ENCODE measurements at regions of chr20 and their contacts with region 1.

Region 1: DNA sequence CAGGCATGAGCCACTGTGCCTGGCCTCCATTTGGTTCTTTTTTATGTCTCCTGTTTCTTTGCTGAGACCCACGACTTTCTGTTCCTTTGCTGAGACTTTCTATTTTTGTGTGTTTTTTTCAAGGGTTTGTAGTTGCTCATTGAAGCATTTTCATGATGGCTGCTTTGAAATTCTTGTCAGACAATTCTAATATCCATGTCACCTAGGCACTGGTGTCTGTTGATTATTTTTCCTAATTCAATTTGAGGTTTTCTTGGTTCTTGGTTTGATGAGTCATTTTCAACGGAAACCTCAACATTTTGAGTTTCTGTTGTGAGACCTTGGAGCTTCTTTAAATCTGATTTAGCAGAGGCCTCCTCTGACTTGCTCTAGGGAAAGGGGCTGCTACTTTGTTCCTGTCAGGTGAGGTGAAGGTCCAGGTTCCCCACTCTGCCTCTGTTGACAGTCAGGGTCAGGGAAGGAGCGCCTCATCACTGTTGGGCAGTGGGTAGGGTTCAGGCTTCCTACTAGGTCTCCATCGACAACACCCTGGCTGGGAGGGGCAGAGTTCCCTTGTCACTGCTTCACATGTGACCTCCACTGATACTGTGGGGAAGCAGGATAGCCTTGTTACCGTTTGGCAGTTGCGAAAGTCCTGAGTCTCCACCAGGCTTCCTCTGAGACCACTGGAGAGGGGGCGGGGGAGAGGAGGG is 67.2 kb upstream of the RNF24 start:
- DNase-seq: no peak
- ATAC-seq: no peak
- H3K4me3 ChIP-seq: no peak overlapping the region
- H3K27ac ChIP-seq: peak overlapping the region in 1 of 2 experiments; percentile 31; a peak in 1 of 6 replicates
- H3K4me1 ChIP-seq: peaks cover 8% of the 10 kb centered on the region; the same call in 2 of the 3 replicates
- CTCF ChIP-seq: no peak
- EP300 ChIP-seq: no peak
- POLR2A ChIP-seq: no peak
- RAD21 ChIP-seq: no peak

Region 2: DNA sequence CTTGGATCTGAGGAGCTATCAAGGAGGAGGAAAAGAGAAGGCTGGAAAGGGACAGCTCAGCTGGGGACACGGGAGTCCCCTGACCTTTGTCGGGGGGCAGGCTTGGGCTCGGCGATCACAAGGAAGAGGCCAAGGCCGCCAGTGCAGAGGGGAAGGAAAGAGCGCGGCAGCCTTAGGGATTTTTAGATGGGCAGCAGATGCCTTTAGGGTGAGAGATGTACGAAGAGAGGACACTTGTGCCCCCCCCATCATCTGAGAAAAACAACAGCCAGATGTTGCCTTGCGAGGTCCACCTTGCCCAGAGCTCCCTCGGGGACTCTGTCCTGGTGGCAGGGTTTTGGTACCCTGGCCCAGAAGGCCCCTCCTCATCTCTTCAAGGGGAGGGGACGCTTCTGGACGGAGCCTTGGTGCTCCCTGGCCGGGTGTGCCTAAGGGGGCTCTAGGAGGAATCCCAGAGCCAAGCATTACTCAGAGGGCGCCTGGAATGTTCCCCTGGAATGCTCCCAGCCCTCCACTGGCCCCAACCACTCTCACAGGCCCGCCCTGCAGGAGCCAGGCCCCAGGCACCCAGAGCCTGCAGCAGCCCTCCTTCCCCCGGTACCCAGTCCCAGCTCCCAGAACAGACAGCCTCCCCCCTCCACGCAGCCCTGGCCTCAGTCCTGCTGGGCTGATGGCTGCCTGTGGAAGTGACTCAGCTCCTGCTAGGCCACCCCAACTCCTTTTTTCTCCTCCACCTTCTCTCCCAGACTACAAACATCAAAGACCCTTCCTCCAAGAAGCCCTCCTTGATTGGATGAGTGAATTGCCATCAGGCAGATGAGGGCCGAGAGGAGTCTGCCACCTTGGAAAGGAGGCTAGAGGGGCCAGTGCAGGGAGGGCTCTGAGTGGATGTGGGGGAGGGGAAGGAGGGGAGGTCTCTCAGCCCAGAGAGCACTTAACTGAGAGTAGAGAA is 402.5 kb before region 1 on chr20:
- CTCF ChIA-PET with region 1: interaction called, 17 read pairs
- POLR2A ChIA-PET with region 1: no interaction called
- DNase-seq: no peak
- ATAC-seq: no peak
- H3K4me3 ChIP-seq: no peak overlapping the region
- H3K27ac ChIP-seq: peak overlapping the region in 1 of 2 experiments; percentile 31; a peak in 2 of 6 replicates
- H3K4me1 ChIP-seq: peaks cover 25% of the 10 kb centered on the region; the same call in 2 of the 3 replicates
- CTCF ChIP-seq: no peak
- EP300 ChIP-seq: no peak
- POLR2A ChIP-seq: no peak
- RAD21 ChIP-seq: no peak

Region 3: GRCh38 chr20:4014031-4014474 is 68.5 kb before region 1 on chr20:
- CTCF ChIA-PET with region 1: interaction called, 167 read pairs
- POLR2A ChIA-PET with region 1: interaction called, 10 read pairs
- DNase-seq: peak; percentile 73 to 87
- ATAC-seq: peak; percentile 74 to 84
- H3K4me3 ChIP-seq: peak overlapping the region; percentile 95
- H3K27ac ChIP-seq: peak overlapping the region; percentile 34 to 82; a peak in 4 of 6 replicates
- H3K4me1 ChIP-seq: peaks cover 51% of the 10 kb centered on the region
- CTCF ChIP-seq: peak; percentile 91
- EP300 ChIP-seq: no peak
- POLR2A ChIP-seq: no peak
- RAD21 ChIP-seq: peak; percentile 95 to 96

Region 4: GRCh38 chr20:4045741-4046140 is 36.8 kb before region 1 on chr20:
- CTCF ChIA-PET with region 1: interaction called, 63 read pairs
- POLR2A ChIA-PET with region 1: interaction called, 7 read pairs
- DNase-seq: no peak
- ATAC-seq: no peak; a peak in 1 of 6 replicates
- H3K4me3 ChIP-seq: no peak overlapping the region
- H3K27ac ChIP-seq: no peak overlapping the region
- H3K4me1 ChIP-seq: peaks cover 14% of the 10 kb centered on the region
- CTCF ChIP-seq: no peak
- EP300 ChIP-seq: no peak
- POLR2A ChIP-seq: no peak
- RAD21 ChIP-seq: no peak

Region 5: GRCh38 chr20:4064144-4064909 is 18.2 kb before region 1 on chr20:
- CTCF ChIA-PET with region 1: interaction called, 146 read pairs
- POLR2A ChIA-PET with region 1: no interaction called
- DNase-seq: peak; percentile 42 to 64
- ATAC-seq: peak; percentile 71 to 87; a peak in 5 of 6 replicates
- H3K4me3 ChIP-seq: no peak overlapping the region
- H3K27ac ChIP-seq: peak overlapping the region; percentile 45 to 76
- H3K4me1 ChIP-seq: peaks cover 23% of the 10 kb centered on the region
- CTCF ChIP-seq: no peak
- EP300 ChIP-seq: no peak
- POLR2A ChIP-seq: no peak
- RAD21 ChIP-seq: no peak

Region 6: GRCh38 chr20:4102381-4102780 is 19.8 kb after region 1 on chr20:
- CTCF ChIA-PET with region 1: interaction called, 25 read pairs
- POLR2A ChIA-PET with region 1: no interaction called
- DNase-seq: no peak
- ATAC-seq: peak; percentile 48 to 65; a peak in 4 of 6 replicates
- H3K4me3 ChIP-seq: no peak overlapping the region
- H3K27ac ChIP-seq: peak overlapping the region; percentile 22 to 65; a peak in 4 of 6 replicates
- H3K4me1 ChIP-seq: peaks cover 16% of the 10 kb centered on the region; the same call in 2 of the 3 replicates
- CTCF ChIP-seq: no peak
- EP300 ChIP-seq: no peak
- POLR2A ChIP-seq: no peak
- RAD21 ChIP-seq: no peak

Region 7: GRCh38 chr20:4195499-4195898 is 112.9 kb after region 1 on chr20:
- CTCF ChIA-PET with region 1: interaction called, 12 read pairs
- POLR2A ChIA-PET with region 1: no interaction called
- DNase-seq: peak; percentile 52 to 61
- ATAC-seq: peak; percentile 14 to 24; a peak in 3 of 6 replicates
- H3K4me3 ChIP-seq: no peak overlapping the region
- H3K27ac ChIP-seq: peak overlapping the region; percentile 48 to 88
- H3K4me1 ChIP-seq: peaks cover 55% of the 10 kb centered on the region
- CTCF ChIP-seq: peak; percentile 80
- EP300 ChIP-seq: no peak
- POLR2A ChIP-seq: no peak
- RAD21 ChIP-seq: peak; percentile 89 to 90